Activated CD4-positive, alpha-beta T cell treated with anti-CD3 and anti-CD28 coated beads for 36 hours (primary cell): ENCODE measurements at regions of chr7 and their contacts with region 1.

Region 1: DNA sequence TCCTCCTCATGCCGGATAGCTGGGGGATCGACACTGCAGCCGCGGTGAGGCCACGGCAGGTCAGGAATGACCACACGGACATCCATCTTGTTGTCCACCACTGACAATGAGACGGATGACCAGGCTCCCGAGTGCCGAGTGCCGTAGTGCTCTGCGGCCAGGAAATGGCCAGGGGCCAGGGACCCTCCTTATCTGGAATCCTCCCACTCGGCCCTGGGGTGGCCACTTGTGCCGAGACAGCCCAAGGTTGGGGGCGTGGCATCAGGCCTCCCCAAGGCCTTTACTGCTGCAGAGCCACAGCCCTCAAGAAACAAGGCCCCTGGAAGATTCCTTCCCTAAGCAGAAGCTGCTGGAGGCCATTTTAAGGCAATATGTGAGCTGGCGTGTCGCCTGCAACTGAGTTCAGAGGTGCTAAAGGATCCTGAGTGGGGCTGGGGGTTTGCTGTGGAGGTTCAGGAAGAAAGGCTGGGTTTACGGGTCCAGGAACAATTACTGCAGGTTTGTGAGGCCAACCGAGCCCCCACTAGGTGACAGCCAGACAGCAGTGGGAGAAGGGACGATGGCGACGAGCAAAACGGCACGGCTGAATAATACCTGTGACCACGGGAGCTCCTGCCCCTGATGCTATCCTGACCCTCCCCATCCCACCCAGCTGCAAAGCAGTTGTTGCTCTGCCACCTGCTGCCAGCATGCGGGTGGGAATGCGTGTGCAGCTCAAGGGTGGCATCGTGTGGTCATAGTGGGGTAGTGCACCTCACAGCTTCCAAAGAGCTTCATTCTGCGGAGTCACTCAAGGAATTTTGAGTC is 31.6 kb upstream of the LEP start:
- DNase-seq: peak; percentile 80
- ATAC-seq: peak; percentile 85
- H3K4me3 Mint-ChIP-seq: no peak overlapping the region
- H3K27ac Mint-ChIP-seq: no peak overlapping the region
- H3K4me1 Mint-ChIP-seq: no peaks in the 10 kb centered on the region
- H3K27me3 Mint-ChIP-seq: peaks cover 6% of the 10 kb centered on the region

Region 2: GRCh38 chr7:127708788-127709187 is 500.6 kb before region 1 on chr7:
- CTCF ChIA-PET with region 1: interaction called, 88 read pairs
- POLR2A ChIA-PET with region 1: no interaction called
- intact Hi-C with region 1: loop called (anchors 1 kb)
- DNase-seq: peak; percentile 82
- ATAC-seq: peak; percentile 85
- H3K4me3 Mint-ChIP-seq: no peak overlapping the region
- H3K27ac Mint-ChIP-seq: no peak overlapping the region
- H3K4me1 Mint-ChIP-seq: peaks cover 7% of the 10 kb centered on the region
- H3K27me3 Mint-ChIP-seq: no peaks in the 10 kb centered on the region

Region 3: GRCh38 chr7:128031901-128032604 is 177.4 kb before region 1 on chr7:
- CTCF ChIA-PET with region 1: interaction called, 3 read pairs
- POLR2A ChIA-PET with region 1: no interaction called
- intact Hi-C with region 1: loop called (anchors 2 kb)
- DNase-seq: peak; percentile 81
- ATAC-seq: peak; percentile 98
- H3K4me3 Mint-ChIP-seq: peak overlapping the region; percentile 64
- H3K27ac Mint-ChIP-seq: no peak overlapping the region
- H3K4me1 Mint-ChIP-seq: peaks cover 27% of the 10 kb centered on the region
- H3K27me3 Mint-ChIP-seq: no peaks in the 10 kb centered on the region

Region 4: DNA sequence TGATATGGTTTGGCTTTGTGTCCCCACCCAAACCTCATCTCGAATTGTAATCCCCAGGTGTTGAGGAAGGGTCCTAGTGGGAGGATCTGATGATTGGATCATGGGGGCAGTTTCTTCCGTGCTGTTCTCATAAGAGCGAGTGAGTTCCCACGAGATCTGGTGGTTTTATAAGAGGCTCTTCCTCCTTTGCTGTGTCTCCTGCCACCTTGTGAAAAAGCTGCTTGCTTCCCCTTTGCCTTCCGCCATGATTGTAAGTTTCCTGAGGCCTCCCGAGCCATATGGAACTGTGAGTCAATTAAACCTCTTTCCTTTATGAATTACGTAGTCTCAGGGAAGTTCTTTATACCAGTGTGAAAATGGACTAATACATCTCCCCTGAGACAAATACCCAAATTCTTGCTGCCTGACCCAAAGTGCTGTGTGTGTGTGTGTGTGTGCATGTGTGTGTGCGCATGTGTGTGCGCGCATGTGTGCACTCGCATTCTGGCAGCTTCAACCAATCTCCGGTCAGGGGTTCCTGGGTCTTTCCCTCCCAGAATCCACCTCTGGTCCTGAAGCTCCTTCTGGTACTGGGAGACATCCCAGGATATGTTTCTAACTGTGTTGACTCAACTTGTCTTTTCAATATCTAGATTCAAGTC is 80.1 kb before region 1 on chr7:
- CTCF ChIA-PET with region 1: interaction called, 88 read pairs
- POLR2A ChIA-PET with region 1: no interaction called
- intact Hi-C with region 1: no loop called
- DNase-seq: no peak
- ATAC-seq: no peak
- H3K4me3 Mint-ChIP-seq: no peak overlapping the region
- H3K27ac Mint-ChIP-seq: no peak overlapping the region
- H3K4me1 Mint-ChIP-seq: peaks cover 6% of the 10 kb centered on the region
- H3K27me3 Mint-ChIP-seq: peaks cover 11% of the 10 kb centered on the region

Region 5: GRCh38 chr7:128194533-128195282 is 14.7 kb before region 1 on chr7:
- CTCF ChIA-PET with region 1: interaction called, 10 read pairs
- POLR2A ChIA-PET with region 1: no interaction called
- intact Hi-C with region 1: no loop called
- DNase-seq: peak; percentile 46
- ATAC-seq: peak; percentile 88
- H3K4me3 Mint-ChIP-seq: no peak overlapping the region
- H3K27ac Mint-ChIP-seq: no peak overlapping the region
- H3K4me1 Mint-ChIP-seq: peaks cover 9% of the 10 kb centered on the region
- H3K27me3 Mint-ChIP-seq: peaks cover 18% of the 10 kb centered on the region

Region 6: GRCh38 chr7:128343554-128344430 is 134.4 kb after region 1 on chr7 and contains the start of gene RBM28:
- CTCF ChIA-PET with region 1: no interaction called
- POLR2A ChIA-PET with region 1: no interaction called
- intact Hi-C with region 1: no loop called
- DNase-seq: peak; percentile 90
- ATAC-seq: peak; percentile 96
- H3K4me3 Mint-ChIP-seq: peak within 1 kb of the TSS; percentile 84
- H3K27ac Mint-ChIP-seq: peak within 1 kb of the TSS; percentile 91
- H3K4me1 Mint-ChIP-seq: peaks cover 25% of the 10 kb centered on the region
- H3K27me3 Mint-ChIP-seq: peaks cover 9% of the 10 kb centered on the region
- total RNA-seq, gene RBM28: 55.0 to 55.2 TPM

Region 7: DNA sequence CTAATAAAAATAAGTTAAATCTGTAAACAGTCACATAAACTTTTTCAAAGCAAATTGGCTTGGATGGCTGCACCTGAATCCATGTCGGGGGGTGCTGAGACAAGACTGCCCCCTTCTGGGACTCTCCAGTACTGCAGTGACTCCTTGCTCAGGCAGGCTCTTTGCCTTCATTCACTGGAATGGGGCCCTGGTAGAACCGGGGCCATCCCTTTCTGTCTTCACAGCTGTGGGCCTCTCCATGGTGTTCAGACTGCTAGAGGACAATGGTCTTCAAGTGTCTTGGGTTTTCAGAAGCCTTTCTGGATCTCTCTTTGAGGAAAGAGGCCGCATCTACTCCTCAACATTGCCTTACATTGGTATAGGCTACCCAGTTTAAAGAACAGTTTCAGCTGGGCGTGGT is 216.4 kb after region 1 on chr7:
- CTCF ChIA-PET with region 1: no interaction called
- POLR2A ChIA-PET with region 1: no interaction called
- intact Hi-C with region 1: no loop called
- DNase-seq: peak; percentile 91
- ATAC-seq: peak; percentile 82
- H3K4me3 Mint-ChIP-seq: no peak overlapping the region
- H3K27ac Mint-ChIP-seq: no peak overlapping the region
- H3K4me1 Mint-ChIP-seq: no peaks in the 10 kb centered on the region
- H3K27me3 Mint-ChIP-seq: peaks cover 12% of the 10 kb centered on the region

Region 8: GRCh38 chr7:128718967-128719642 is 509.7 kb after region 1 on chr7:
- CTCF ChIA-PET with region 1: no interaction called
- POLR2A ChIA-PET with region 1: no interaction called
- intact Hi-C with region 1: no loop called
- DNase-seq: no peak
- ATAC-seq: peak; percentile 39
- H3K4me3 Mint-ChIP-seq: no peak overlapping the region
- H3K27ac Mint-ChIP-seq: no peak overlapping the region
- H3K4me1 Mint-ChIP-seq: peaks cover 3% of the 10 kb centered on the region
- H3K27me3 Mint-ChIP-seq: peaks cover 10% of the 10 kb centered on the region